GM12878 (cell line): ENCODE measurements at regions of chr3 and their contacts with region 1.

Region 1: GRCh38 chr3:5051772-5052171 is 70.3 kb upstream of the ARL8B start:
- DNase-seq: peak; percentile 35
- ATAC-seq: peak; percentile 86
- H3K4me3 ChIP-seq: no peak overlapping the region
- H3K27ac ChIP-seq: no peak overlapping the region; the same call in 1 of the 2 replicates
- H3K4me1 ChIP-seq: peaks cover 38% of the 10 kb centered on the region
- H3K27me3 ChIP-seq: no peaks in the 10 kb centered on the region
- CTCF ChIP-seq: no peak
- EP300 ChIP-seq: peak; percentile 77 to 79
- POLR2A ChIP-seq: no peak
- RAD21 ChIP-seq: no peak

Region 2: GRCh38 chr3:5041315-5041714 is 10.5 kb before region 1 on chr3:
- CTCF ChIA-PET with region 1: interaction called, 31 read pairs
- POLR2A ChIA-PET with region 1: interaction called, 9 read pairs
- RAD21 ChIA-PET with region 1: interaction called, 73 read pairs
- SMC1A ChIA-PET with region 1: interaction called, 181 read pairs
- in situ Hi-C with region 1: no loop called
- intact Hi-C with region 1: no loop called
- DNase-seq: no peak
- ATAC-seq: peak; percentile 49
- H3K4me3 ChIP-seq: no peak overlapping the region
- H3K27ac ChIP-seq: no peak overlapping the region
- H3K4me1 ChIP-seq: peaks cover 9% of the 10 kb centered on the region
- H3K27me3 ChIP-seq: no peaks in the 10 kb centered on the region
- CTCF ChIP-seq: 0 out of 6 replicates have a peak, but pooled peaks of 1 of the 3 experiments have one; percentile 18
- EP300 ChIP-seq: no peak
- POLR2A ChIP-seq: no peak
- RAD21 ChIP-seq: no peak

Region 3: DNA sequence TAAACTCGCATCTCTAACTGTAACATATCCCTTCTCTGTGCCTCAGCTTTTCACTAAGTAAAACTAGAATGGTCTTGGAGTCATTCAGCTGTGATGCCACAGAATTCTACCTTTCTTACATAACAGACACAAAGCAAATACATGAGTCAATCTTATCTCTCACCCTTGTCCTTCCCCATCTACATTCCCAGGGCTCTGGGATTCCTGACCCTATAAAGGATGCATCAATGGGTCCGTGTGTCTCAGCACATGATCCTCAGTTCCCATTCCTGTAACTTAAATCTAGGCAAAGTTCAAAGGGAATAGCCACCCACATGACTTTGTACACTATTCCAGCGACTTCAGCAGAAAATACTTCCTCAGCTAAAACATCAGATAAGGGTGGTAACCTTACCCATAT is 58.6 kb after region 1 on chr3:
- CTCF ChIA-PET with region 1: no interaction called
- POLR2A ChIA-PET with region 1: no interaction called
- RAD21 ChIA-PET with region 1: no interaction called
- SMC1A ChIA-PET with region 1: no interaction called
- in situ Hi-C with region 1: no loop called
- intact Hi-C with region 1: no loop called
- DNase-seq: no peak
- ATAC-seq: no peak
- H3K4me3 ChIP-seq: no peak overlapping the region
- H3K27ac ChIP-seq: no peak overlapping the region
- H3K4me1 ChIP-seq: no peaks in the 10 kb centered on the region
- H3K27me3 ChIP-seq: no peaks in the 10 kb centered on the region
- CTCF ChIP-seq: no peak
- EP300 ChIP-seq: no peak
- POLR2A ChIP-seq: no peak
- RAD21 ChIP-seq: no peak